ENCODE measurements at regions of chr1 and their contacts with region 1.

Region 1: DNA sequence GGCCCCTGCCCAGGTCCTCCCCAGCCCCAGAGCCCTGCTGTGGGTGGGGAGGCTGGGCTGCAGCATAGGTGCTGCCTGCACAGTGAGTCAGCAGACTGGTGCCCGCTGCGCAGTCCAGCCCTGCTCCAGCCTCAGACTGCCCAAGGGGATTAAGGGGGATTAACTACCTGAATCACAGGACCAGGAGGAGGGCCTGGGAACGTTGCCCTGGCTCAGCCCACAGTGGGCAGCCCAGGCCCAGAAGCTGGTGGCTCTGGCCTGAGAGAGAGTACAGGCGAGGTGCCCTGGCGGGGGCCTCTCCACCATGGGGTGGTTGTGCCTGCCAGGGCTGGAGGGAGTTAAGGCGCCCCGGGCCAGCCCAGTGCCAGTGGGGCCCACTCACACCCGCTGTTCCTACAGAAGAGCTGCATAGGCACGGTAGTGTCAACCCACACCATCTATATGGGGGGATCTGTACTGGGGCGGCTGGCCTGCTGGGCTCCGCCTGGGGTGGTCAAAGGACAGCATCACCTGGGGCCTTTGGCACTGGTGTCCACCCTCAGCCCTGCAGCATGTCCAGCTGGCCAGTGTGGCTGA is 2.3 kb downstream of the OBSCN start:
- DNase-seq: peak; percentile 70
- H3K27ac ChIP-seq: peak overlapping the region; percentile 88
- CTCF ChIP-seq: no peak

Region 2: DNA sequence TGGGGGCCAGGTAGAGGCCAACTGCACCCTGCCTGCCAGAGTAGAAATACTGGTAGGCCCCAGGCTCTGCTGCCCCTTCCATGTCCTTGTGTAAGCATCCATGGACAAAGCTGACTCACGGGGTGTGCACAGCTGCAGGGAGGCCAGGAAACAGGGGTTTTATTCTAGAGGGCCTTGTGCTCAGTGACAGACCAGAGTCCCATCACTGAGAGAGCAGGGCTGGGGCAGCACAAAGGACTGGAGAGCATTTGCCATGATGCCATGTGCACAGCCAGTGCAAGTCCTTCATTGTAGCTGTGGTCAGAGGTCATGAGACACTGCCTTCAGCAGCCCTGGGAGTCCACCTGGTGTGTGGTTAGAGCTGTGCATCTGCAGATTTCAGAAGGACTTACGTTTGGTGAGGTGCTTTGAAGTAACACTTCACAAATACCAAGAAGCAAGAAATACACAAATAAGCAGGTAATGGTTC is 119.5 kb before region 1 on chr1:
- CTCF ChIA-PET with region 1: no interaction called
- POLR2A ChIA-PET with region 1: no interaction called
- DNase-seq: no peak
- H3K27ac ChIP-seq: peak overlapping the region; percentile 69
- CTCF ChIP-seq: no peak

Region 3: GRCh38 chr1:228131766-228132165 is 78.4 kb before region 1 on chr1:
- CTCF ChIA-PET with region 1: interaction called, 11 read pairs
- POLR2A ChIA-PET with region 1: no interaction called
- DNase-seq: no peak
- H3K27ac ChIP-seq: no peak overlapping the region
- CTCF ChIP-seq: no peak